ENCODE measurements at regions of chr19 and their contacts with region 1.

Region 1: DNA sequence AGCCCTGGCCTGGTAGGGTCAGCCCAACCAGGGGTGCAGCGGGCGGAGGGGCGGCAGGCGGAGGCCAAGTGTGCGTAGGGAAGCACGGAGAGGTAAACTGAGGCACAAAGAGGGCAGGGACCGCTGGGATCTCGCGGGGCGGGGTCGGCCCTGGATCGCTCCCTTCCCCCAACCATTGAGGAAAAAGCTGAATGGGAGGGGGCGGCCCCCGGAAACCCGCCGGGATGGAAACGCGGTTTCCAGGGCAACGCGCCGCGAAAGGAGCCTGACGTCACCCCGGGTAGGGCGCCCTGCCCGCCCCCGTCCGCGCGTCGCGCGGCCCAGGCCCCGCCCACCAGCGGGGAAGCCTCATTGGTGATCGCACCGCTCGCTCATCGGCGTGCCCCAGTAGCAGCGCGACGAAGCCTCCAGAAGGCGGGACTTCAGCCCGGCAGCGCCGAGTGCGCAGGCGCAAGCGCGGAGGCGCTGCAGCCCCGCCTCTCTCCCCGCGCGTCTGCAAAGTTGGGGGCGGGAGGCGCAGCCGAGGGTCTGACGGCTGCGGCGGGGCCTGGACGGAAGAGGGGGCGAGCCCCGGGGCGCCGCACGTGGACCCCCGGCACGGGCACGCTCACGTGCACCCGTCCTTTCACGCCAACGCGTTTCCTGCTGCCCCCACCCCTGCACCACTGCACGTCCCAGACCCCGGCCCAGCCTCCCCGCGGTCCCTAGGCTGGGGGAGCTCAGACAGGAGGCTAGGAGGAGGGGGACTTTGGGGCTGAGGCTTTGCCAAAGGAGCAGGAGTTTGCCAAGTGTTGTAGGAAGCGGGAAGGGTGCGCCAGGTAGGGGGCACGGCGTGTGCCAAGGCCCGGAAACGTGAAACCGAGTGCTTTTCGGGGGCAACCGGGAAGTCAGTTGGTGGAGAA is 8.2 kb upstream of the CIRBP start:
- DNase-seq: peak; percentile 97
- H3K4me3 ChIP-seq: peak overlapping the region; percentile 55 to 93 (median 60)
- H3K4me3 Mint-ChIP-seq: peak overlapping the region; percentile 81 to 89
- H3K27ac ChIP-seq: peak overlapping the region; percentile 74 to 95
- H3K27ac Mint-ChIP-seq: peak overlapping the region; percentile 89 to 97 (median 94)
- H3K4me1 ChIP-seq: peaks cover 63 to 80% of the 10 kb centered on the region in 2 donors
- H3K4me1 Mint-ChIP-seq: peaks cover 58% of the 10 kb centered on the region
- H3K27me3 ChIP-seq: no peaks in the 10 kb centered on the region
- H3K27me3 Mint-ChIP-seq: peaks cover 3 to 12% (median 9%) of the 10 kb centered on the region in 3 donors
- CTCF ChIP-seq: peak; percentile 24

Region 2: GRCh38 chr19:1249298-1249989 is 11.4 kb before region 1 on chr19:
- intact Hi-C with region 1: loop called in 1 of 2 experiments (anchors 1 kb)
- DNase-seq: peak; percentile 93 to 97 (median 95)
- H3K4me3 ChIP-seq: peak overlapping the region; percentile 77 to 99 (median 83)
- H3K4me3 Mint-ChIP-seq: peak overlapping the region; percentile 84
- H3K27ac ChIP-seq: peak overlapping the region; percentile 64 to 95
- H3K27ac Mint-ChIP-seq: peak overlapping the region in 6 of 7 donors; percentile 46 to 87 (median 75)
- H3K4me1 ChIP-seq: peaks cover 38 to 46% of the 10 kb centered on the region in 2 donors
- H3K4me1 Mint-ChIP-seq: peaks cover 24% of the 10 kb centered on the region
- H3K27me3 ChIP-seq: no peaks in the 10 kb centered on the region
- H3K27me3 Mint-ChIP-seq: peaks cover 0 to 6% (median 0%) of the 10 kb centered on the region in 3 donors
- CTCF ChIP-seq: no peak